Gastrocnemius medialis (tissue), 4 donors: ENCODE measurements at regions of chr17 and their contacts with region 1.

Region 1: DNA sequence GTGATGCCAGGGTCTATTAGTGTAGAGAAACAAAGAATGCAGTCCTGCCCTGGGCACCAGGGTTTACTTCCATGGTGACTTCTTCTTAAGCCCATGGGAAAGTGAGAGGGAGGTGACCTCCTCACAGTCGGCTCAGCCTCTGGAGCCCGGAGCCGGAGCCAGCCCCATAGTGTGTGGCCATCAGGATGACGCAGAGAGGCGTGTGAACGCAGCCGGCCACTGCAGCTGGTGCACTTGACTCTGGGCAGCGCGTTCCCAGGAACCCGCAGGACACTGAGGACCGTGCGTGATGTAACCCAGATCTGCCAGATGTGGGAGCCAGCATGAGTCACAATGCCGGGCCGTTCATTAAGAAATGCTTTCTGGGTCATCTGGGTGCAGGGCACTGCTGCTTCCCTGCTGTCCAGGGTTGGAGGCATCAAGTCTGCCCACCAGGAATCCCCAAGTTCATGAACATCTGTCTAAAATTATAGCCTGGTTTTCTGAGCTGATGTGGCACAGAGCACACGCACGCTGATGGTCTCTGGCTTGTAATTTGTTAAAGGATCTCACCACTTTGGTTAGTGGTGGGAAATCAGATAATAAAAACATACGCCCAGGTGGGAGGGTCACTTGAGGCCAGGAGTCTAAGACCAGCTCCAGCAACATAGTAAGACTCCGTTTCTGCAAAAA is 114.1 kb downstream of the PITPNC1 start:
- DNase-seq: peak; percentile 86 to 90
- ATAC-seq: peak; percentile 90 to 92
- H3K4me3 ChIP-seq: peak overlapping the region; percentile 19 to 44 (median 38)
- H3K27ac ChIP-seq: peak overlapping the region; percentile 55 to 82 (median 68)
- H3K4me1 ChIP-seq: peaks cover 23 to 31% of the 10 kb centered on the region in 2 donors
- H3K27me3 ChIP-seq: peaks cover 0 to 9% (median 7%) of the 10 kb centered on the region in 3 donors
- CTCF ChIP-seq: no peak
- POLR2A ChIP-seq: peak; percentile 57 to 78

Region 2: GRCh38 chr17:67386965-67387551 is 104.1 kb before region 1 on chr17:
- in situ Hi-C with region 1: loop called in 1 of 4 experiments (anchors 10 kb)
- intact Hi-C with region 1: no loop called
- DNase-seq: no peak
- ATAC-seq: no peak
- H3K4me3 ChIP-seq: no peak overlapping the region
- H3K27ac ChIP-seq: no peak overlapping the region
- H3K4me1 ChIP-seq: peaks cover 4 to 9% of the 10 kb centered on the region in 2 donors
- H3K27me3 ChIP-seq: no peaks in the 10 kb centered on the region
- CTCF ChIP-seq: peak in 4 of 5 experiments; percentile 37 to 57 (median 48)
- POLR2A ChIP-seq: no peak

Region 3: GRCh38 chr17:67549820-67550219 is 58.7 kb after region 1 on chr17:
- in situ Hi-C with region 1: no loop called
- intact Hi-C with region 1: no loop called
- DNase-seq: no peak
- ATAC-seq: peak in 1 of 2 donors; percentile 27
- H3K4me3 ChIP-seq: no peak overlapping the region
- H3K27ac ChIP-seq: peak overlapping the region in 1 of 4 donors; percentile 45
- H3K4me1 ChIP-seq: peaks cover 0 to 4% of the 10 kb centered on the region in 2 donors
- H3K27me3 ChIP-seq: no peaks in the 10 kb centered on the region
- CTCF ChIP-seq: no peak
- POLR2A ChIP-seq: peak in 1 of 2 donors; percentile 32